Mammary epithelial cell (primary cell): ENCODE measurements at regions of chr6 and their contacts with region 1.

Region 1: DNA sequence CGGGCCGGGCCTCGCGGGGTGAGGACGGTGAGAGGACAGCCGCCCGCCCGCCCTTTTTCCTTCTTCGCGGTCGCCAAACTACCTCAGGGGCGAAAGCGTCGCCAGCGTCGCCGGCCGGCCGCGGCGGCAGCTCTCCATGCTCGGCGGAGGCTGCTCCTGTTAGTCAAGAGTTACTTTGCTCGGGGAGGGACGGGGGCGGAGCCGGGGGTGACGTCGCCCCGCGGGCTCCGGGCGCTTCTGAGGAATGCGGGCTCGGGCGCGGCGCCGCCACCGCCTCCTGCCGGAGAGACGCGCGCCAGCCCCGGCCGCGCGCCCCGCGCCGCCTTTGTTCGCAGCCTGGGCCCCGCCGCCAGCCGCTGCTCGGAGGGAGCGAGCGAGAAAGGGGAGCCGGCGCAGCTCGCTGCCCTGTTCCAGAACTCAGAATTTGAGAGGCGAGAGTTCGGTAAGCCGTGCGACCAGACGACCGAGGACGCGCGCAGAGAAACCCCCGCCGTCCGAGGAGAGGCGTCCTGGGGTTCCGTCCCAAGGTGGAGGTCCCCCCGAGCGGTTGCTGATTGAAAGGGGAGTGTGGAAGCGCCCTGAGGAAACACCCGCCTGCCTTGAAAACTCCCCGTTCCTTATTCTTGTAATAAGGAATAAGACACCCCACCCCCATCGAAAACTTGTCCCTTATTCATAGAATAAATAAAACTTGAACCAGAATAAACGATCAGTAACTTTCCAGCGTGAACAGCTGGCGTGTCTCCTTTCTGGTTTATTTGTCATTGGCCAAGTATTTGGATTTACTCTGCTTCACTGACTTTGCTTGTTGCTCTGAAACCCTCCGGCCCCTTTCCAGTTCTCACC is at the start of gene PTPRK:
- DNase-seq: peak; percentile 91
- H3K4me3 ChIP-seq: peak within 1 kb of the TSS; percentile 91 to 100 (median 98)
- H3K27ac ChIP-seq: peak within 1 kb of the TSS; percentile 96
- H3K4me1 ChIP-seq: peaks cover 28% of the 10 kb centered on the region
- H3K27me3 ChIP-seq: no peaks in the 10 kb centered on the region
- CTCF ChIP-seq: peak; percentile 17 to 43
- total RNA-seq, gene PTPRK: 103 to 336 TPM

Region 2: GRCh38 chr6:127737009-127737486 is 783.6 kb before region 1 on chr6:
- CTCF ChIA-PET with region 1: no interaction called
- dilution Hi-C with region 1: no loop called
- in situ Hi-C with region 1: loop called in 1 of 2 experiments (anchors 25 kb)
- intact Hi-C with region 1: loop called (anchors 1 kb)
- DNase-seq: peak; percentile 50
- H3K4me3 ChIP-seq: no peak overlapping the region
- H3K27ac ChIP-seq: no peak overlapping the region
- H3K4me1 ChIP-seq: no peaks in the 10 kb centered on the region
- H3K27me3 ChIP-seq: no peaks in the 10 kb centered on the region
- CTCF ChIP-seq: peak; percentile 51 to 67

Region 3: GRCh38 chr6:128158496-128158895 is 362.2 kb before region 1 on chr6:
- CTCF ChIA-PET with region 1: no interaction called
- dilution Hi-C with region 1: no loop called
- in situ Hi-C with region 1: loop called in 1 of 2 experiments (anchors 25 kb)
- intact Hi-C with region 1: no loop called
- DNase-seq: no peak
- H3K4me3 ChIP-seq: no peak overlapping the region
- H3K27ac ChIP-seq: no peak overlapping the region
- H3K4me1 ChIP-seq: no peaks in the 10 kb centered on the region
- H3K27me3 ChIP-seq: no peaks in the 10 kb centered on the region
- CTCF ChIP-seq: no peak

Region 4: DNA sequence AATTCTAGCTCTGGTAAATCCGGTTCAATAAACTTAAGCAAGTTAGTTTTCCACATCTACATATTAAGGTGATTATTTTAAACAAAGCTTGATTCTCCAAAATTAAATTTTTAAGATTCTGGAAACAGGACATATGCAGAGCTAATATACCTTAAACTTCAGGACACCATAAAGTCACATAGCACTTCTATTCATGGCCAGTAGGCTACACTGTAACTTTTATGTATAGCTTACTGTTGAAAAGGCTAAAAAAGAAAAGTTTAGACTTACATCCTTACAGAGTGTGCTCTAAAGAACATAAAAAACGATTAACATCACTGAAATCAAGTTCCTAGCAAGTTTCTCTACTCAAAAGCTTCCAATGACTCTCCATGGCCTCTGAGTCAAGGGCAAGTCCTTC is 225.0 kb before region 1 on chr6:
- CTCF ChIA-PET with region 1: no interaction called
- dilution Hi-C with region 1: no loop called
- in situ Hi-C with region 1: no loop called
- intact Hi-C with region 1: loop called (anchors 2 kb)
- DNase-seq: no peak
- H3K4me3 ChIP-seq: no peak overlapping the region
- H3K27ac ChIP-seq: no peak overlapping the region
- H3K4me1 ChIP-seq: no peaks in the 10 kb centered on the region
- H3K27me3 ChIP-seq: no peaks in the 10 kb centered on the region
- CTCF ChIP-seq: peak; percentile 22 to 39

Region 5: GRCh38 chr6:128487055-128487454 is 33.6 kb before region 1 on chr6:
- CTCF ChIA-PET with region 1: interaction called, 11 read pairs
- dilution Hi-C with region 1: no loop called
- in situ Hi-C with region 1: no loop called
- intact Hi-C with region 1: no loop called
- DNase-seq: no peak
- H3K4me3 ChIP-seq: no peak overlapping the region
- H3K27ac ChIP-seq: peak overlapping the region; percentile 73
- H3K4me1 ChIP-seq: peaks cover 40% of the 10 kb centered on the region
- H3K27me3 ChIP-seq: no peaks in the 10 kb centered on the region
- CTCF ChIP-seq: peak; percentile 41 to 43

Region 6: DNA sequence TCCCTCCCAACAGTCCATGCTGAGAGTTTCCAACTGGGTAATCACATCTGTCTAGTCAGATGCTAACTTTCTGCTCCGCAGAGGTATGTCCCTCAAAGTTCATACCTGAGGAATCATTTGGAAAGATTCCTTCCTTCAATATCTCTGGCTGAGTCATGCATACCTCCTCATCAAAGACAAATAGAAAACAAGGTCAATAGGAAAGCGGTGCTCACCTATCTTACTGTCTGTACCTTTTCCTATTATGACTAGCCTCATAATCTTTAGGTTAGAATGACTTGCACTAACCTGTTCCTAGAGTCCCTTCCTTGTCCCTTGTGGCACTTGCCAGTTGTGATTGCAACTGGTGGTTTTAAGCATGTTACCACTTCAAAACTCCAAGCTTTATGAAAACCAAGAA is 77.9 kb after region 1 on chr6:
- CTCF ChIA-PET with region 1: no interaction called
- dilution Hi-C with region 1: no loop called
- in situ Hi-C with region 1: no loop called
- intact Hi-C with region 1: loop called (anchors 2 kb)
- DNase-seq: peak; percentile 73
- H3K4me3 ChIP-seq: peak overlapping the region in 1 of 3 experiments; percentile 5
- H3K27ac ChIP-seq: peak overlapping the region; percentile 95
- H3K4me1 ChIP-seq: peaks cover 64% of the 10 kb centered on the region
- H3K27me3 ChIP-seq: no peaks in the 10 kb centered on the region
- CTCF ChIP-seq: no peak

Region 7: DNA sequence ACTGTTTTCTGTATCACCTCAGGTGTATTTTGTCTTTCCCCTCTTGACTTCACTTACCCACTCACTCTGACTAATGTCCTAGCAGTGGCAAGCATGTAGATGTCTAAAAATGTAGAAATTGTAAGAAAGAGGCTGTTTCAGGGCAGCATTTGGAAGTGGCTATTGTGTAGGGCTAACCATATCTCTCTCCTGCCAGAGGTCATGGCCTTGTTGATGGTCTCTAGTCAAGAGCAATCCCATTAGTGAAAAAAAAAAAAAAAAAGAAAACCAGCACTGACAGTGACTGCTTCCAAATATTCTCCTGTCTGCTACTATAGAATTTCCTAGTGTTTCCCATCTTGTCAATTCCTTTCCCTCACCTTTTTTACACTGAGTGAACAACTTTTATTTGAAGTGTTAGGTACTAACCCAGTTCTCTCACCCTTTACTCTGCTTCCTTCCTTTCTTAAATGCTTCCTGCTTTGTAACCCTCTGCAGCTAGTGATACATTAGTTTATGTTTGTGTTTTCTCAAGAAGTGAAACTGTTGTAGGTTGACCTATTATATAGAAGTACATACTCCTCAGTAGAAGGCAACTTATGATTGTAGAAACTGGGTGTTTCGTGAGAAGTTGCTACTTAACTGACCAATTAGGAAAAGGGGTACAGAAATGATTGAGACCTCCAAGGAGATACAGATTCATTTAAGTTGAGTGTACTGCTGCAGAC is 173.8 kb after region 1 on chr6:
- CTCF ChIA-PET with region 1: no interaction called
- dilution Hi-C with region 1: no loop called
- in situ Hi-C with region 1: no loop called
- intact Hi-C with region 1: no loop called
- DNase-seq: no peak
- H3K4me3 ChIP-seq: no peak overlapping the region
- H3K27ac ChIP-seq: no peak overlapping the region
- H3K4me1 ChIP-seq: peaks cover 13% of the 10 kb centered on the region
- H3K27me3 ChIP-seq: no peaks in the 10 kb centered on the region
- CTCF ChIP-seq: no peak

Region 8: DNA sequence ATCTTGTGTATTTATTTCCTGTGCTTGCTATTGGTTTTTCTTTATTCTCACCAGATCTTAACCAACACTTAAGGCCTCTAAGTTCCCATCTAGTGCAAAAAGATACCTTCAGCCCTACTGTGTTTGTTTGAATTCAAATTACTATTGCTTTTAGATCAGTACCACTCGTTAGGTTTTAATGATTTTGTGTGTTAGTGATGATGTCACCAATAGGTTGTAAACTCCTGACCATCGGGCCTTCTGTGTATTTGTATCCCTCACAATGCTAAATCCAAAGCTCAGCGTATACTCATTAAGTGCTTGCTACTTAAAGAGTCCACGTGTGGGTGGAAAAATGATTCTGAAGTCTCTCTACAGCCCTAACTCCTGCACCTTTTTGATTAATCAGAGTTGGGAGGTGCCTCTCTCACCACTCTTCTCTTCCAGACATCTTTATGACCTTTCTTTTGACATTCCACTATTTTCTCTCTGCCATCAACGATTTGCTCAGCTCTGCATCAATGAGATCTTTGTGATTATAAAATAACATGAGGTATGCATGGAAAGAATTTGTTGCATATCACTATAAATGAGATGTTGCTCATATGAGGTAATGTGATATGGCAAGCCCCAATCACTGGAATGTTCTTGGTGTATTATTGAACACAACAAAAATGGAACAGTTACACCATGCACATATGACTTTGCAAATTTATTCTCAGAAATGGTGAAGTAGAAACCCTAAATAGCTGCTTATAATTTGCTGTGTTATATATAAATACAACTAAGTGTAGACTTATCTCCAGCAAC is 307.2 kb after region 1 on chr6:
- CTCF ChIA-PET with region 1: no interaction called
- dilution Hi-C with region 1: no loop called
- in situ Hi-C with region 1: no loop called
- intact Hi-C with region 1: no loop called
- DNase-seq: no peak
- H3K4me3 ChIP-seq: no peak overlapping the region
- H3K27ac ChIP-seq: no peak overlapping the region
- H3K4me1 ChIP-seq: no peaks in the 10 kb centered on the region
- H3K27me3 ChIP-seq: no peaks in the 10 kb centered on the region
- CTCF ChIP-seq: no peak

Region 9: DNA sequence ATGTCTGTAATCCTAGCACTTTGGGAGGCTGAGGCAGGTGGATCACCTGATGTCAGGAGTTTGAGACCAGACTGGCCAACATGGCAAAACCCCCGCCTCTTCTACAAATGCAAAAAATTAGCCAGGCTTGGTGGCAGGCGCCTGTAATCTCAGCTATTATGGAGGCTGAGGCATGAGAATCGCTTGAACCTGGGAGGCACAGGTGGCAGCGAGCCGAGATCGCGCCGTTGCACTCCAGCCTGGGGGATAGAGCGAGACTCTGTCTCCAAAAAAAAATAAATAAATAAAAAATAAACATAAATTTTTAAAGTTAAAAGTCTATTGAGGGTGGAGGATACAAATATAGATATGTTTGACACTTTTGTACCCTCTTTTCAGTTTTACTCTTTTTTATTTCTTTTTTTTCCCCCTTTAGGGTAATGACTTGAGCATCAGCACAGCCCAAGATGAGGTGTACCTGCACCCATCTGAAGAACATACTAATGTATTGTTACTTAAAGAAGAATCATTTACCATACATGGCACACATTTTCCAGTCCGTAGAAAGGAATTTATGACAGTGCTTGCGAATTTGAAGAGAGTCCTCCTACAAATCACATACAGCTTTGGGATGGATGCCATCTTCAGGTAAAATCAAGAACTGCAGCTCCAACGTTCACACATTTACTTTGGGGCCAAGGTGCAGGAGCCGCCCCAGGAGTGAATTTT is 731.2 kb after region 1 on chr6:
- CTCF ChIA-PET with region 1: no interaction called
- dilution Hi-C with region 1: no loop called
- in situ Hi-C with region 1: no loop called
- intact Hi-C with region 1: loop called (anchors 5 kb)
- DNase-seq: peak; percentile 58
- H3K4me3 ChIP-seq: no peak overlapping the region
- H3K27ac ChIP-seq: no peak overlapping the region
- H3K4me1 ChIP-seq: no peaks in the 10 kb centered on the region
- H3K27me3 ChIP-seq: peaks cover 4% of the 10 kb centered on the region
- CTCF ChIP-seq: peak; percentile 83 to 85